GM12878 (cell line): ENCODE measurements at regions of chr19 and their contacts with region 1.

Region 1: GRCh38 chr19:42529248-42529764 is 1.0 kb upstream of the CEACAM1 start:
- DNase-seq: no peak
- ATAC-seq: peak; percentile 94
- H3K4me3 ChIP-seq: peak overlapping the region; percentile 20; the same call in 1 of the 2 replicates
- H3K27ac ChIP-seq: peak overlapping the region; percentile 74
- H3K4me1 ChIP-seq: peaks cover 15% of the 10 kb centered on the region
- H3K27me3 ChIP-seq: no peaks in the 10 kb centered on the region
- CTCF ChIP-seq: peak; percentile 97 to 98 (median 97); a peak in 5 of 6 replicates
- EP300 ChIP-seq: no peak
- POLR2A ChIP-seq: 0 out of 2 replicates have a peak, but pooled peaks have one; percentile 25
- RAD21 ChIP-seq: peak; percentile 98

Region 2: GRCh38 chr19:42433503-42434260 is 95.6 kb before region 1 on chr19:
- CTCF ChIA-PET with region 1: interaction called, 40 read pairs
- POLR2A ChIA-PET with region 1: interaction called, 3 read pairs
- RAD21 ChIA-PET with region 1: interaction called, 23 read pairs
- SMC1A ChIA-PET with region 1: interaction called, 23 read pairs
- in situ Hi-C with region 1: no loop called
- intact Hi-C with region 1: no loop called
- DNase-seq: no peak
- ATAC-seq: peak; percentile 97
- H3K4me3 ChIP-seq: no peak overlapping the region
- H3K27ac ChIP-seq: no peak overlapping the region
- H3K4me1 ChIP-seq: no peaks in the 10 kb centered on the region
- H3K27me3 ChIP-seq: no peaks in the 10 kb centered on the region
- CTCF ChIP-seq: peak; percentile 91 to 95 (median 93)
- EP300 ChIP-seq: no peak
- POLR2A ChIP-seq: no peak
- RAD21 ChIP-seq: peak; percentile 83

Region 3: DNA sequence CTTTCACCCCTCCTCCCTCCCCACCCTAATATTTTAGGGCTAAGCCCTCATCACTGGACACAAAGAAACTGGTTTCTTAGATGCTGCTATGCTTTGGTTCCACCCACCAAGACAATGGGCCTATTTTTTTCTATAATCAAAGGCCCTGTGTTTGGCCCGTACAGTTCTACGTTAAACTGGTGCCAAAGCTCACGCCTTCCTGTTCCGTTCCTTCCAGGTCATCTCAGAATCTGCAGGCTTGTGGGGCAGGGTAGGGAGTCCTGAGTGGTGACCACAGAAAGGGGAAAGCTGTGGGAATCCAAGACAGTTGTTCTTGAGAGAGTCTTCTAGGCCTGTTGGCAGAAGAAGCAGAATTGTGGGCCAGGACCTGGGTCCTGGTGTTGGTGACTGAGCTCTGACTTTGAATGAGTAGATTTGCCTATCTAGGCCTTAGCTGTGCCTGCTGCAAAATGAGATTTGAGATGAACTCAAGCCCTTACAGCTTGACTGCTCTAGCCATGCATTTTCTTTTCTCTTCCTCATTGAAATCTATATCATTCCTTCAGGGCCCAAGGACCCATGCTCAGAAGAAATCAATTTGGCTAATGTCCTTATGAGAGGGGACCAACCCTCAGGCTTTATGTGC is 67.5 kb before region 1 on chr19:
- CTCF ChIA-PET with region 1: interaction called, 116 read pairs
- POLR2A ChIA-PET with region 1: interaction called, 32 read pairs
- RAD21 ChIA-PET with region 1: interaction called, 135 read pairs
- SMC1A ChIA-PET with region 1: interaction called, 127 read pairs
- in situ Hi-C with region 1: no loop called
- intact Hi-C with region 1: loop called (anchors 1 kb)
- DNase-seq: no peak
- ATAC-seq: no peak
- H3K4me3 ChIP-seq: no peak overlapping the region
- H3K27ac ChIP-seq: no peak overlapping the region
- H3K4me1 ChIP-seq: peaks cover 22% of the 10 kb centered on the region
- H3K27me3 ChIP-seq: no peaks in the 10 kb centered on the region
- CTCF ChIP-seq: no peak
- EP300 ChIP-seq: no peak
- POLR2A ChIP-seq: no peak
- RAD21 ChIP-seq: no peak

Region 4: DNA sequence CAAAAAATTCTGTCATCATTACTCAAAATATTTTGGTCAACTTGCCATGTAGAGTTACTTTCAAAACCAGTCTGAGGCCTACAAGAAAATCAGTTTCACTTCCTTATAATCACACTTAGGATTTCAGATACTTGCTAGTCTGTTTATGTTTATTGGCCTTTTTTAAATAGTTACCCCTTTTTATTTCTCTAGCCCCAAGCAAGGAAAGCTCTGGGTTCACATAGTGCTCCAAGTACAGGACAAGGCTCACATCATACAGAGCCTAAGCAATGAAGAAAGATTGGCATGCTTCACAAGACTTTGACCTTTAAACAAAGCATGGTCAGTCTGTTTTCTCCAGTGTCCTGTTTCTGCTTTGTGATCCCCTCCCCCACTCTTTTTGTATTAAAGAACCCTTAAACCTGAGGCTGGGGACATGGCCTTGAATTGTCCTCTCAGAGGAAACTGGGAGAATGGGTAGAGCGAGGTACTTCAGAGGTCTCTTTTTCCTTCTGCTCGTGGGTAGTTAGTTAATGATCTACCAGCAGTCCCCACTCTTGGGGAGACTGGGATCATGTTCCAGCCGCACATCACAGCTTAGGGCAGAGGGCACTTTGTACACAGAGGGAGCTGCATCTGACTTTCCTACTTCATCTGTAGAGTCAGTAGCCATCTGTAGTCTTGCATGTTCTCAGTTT is 31.7 kb before region 1 on chr19:
- CTCF ChIA-PET with region 1: interaction called, 10 read pairs
- POLR2A ChIA-PET with region 1: interaction called, 4 read pairs
- RAD21 ChIA-PET with region 1: interaction called, 6 read pairs
- SMC1A ChIA-PET with region 1: interaction called, 48 read pairs
- in situ Hi-C with region 1: no loop called
- intact Hi-C with region 1: no loop called
- DNase-seq: peak; percentile 60
- ATAC-seq: peak; percentile 86
- H3K4me3 ChIP-seq: peak overlapping the region; percentile 9; the same call in 1 of the 2 replicates
- H3K27ac ChIP-seq: peak overlapping the region; percentile 80
- H3K4me1 ChIP-seq: peaks cover 28% of the 10 kb centered on the region
- H3K27me3 ChIP-seq: no peaks in the 10 kb centered on the region
- CTCF ChIP-seq: no peak
- EP300 ChIP-seq: peak; percentile 66 to 78; a peak in 3 of 4 replicates
- POLR2A ChIP-seq: no peak
- RAD21 ChIP-seq: 0 out of 2 replicates have a peak, but pooled peaks have one; percentile 8

Region 5: GRCh38 chr19:42519108-42519507 is 10.2 kb before region 1 on chr19:
- CTCF ChIA-PET with region 1: interaction called, 51 read pairs
- POLR2A ChIA-PET with region 1: interaction called, 16 read pairs
- RAD21 ChIA-PET with region 1: interaction called, 39 read pairs
- SMC1A ChIA-PET with region 1: interaction called, 53 read pairs
- in situ Hi-C with region 1: no loop called
- intact Hi-C with region 1: no loop called
- DNase-seq: no peak
- ATAC-seq: no peak
- H3K4me3 ChIP-seq: no peak overlapping the region
- H3K27ac ChIP-seq: no peak overlapping the region
- H3K4me1 ChIP-seq: peaks cover 18% of the 10 kb centered on the region
- H3K27me3 ChIP-seq: no peaks in the 10 kb centered on the region
- CTCF ChIP-seq: no peak
- EP300 ChIP-seq: no peak
- POLR2A ChIP-seq: no peak
- RAD21 ChIP-seq: no peak

Region 6: DNA sequence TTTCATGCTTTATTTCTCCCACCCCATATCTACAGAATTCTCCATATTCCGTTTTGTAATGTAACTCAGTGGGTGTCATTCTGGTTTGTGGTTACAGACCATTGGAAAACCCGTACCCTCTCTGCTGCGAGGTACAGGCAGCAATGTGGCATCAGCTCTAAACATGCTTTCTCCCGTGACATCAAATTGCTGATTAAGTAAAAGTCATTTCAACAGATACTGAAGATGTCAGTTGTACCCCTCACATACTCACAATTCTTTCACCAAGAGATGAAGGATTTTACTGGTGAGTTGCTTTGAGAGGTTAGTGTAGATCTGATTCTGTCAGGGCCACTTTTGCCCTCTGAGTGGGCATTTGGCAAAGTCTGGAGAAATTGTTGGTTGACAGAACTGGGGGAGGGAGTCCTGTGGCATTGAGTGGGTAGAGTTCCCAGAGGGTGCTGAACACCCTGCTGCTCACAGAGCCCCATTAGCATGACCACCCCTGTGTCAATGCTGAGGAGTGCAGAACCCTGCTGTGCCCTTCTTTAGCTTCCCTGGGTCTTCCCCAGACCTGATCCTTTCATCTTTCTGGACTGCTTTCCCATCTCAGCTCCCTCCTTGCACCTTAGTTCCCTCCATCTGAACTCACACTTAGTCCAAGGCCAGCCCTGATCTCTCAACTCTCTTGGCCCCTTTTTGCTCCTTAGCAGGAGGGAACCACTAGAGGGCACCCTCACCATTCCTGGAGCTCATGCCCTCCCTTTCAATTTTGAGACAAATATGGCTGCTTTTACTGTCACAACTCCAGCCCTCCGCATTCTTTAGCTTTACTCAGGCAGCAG is 105.3 kb after region 1 on chr19:
- CTCF ChIA-PET with region 1: no interaction called
- POLR2A ChIA-PET with region 1: no interaction called
- RAD21 ChIA-PET with region 1: no interaction called
- SMC1A ChIA-PET with region 1: no interaction called
- in situ Hi-C with region 1: no loop called
- intact Hi-C with region 1: no loop called
- DNase-seq: no peak
- ATAC-seq: peak; percentile 82
- H3K4me3 ChIP-seq: no peak overlapping the region
- H3K27ac ChIP-seq: no peak overlapping the region
- H3K4me1 ChIP-seq: no peaks in the 10 kb centered on the region
- H3K27me3 ChIP-seq: no peaks in the 10 kb centered on the region; a peak in 2 of 4 replicates
- CTCF ChIP-seq: peak; percentile 75 to 82 (median 82)
- EP300 ChIP-seq: no peak
- POLR2A ChIP-seq: no peak
- RAD21 ChIP-seq: peak; percentile 74

Region 7: DNA sequence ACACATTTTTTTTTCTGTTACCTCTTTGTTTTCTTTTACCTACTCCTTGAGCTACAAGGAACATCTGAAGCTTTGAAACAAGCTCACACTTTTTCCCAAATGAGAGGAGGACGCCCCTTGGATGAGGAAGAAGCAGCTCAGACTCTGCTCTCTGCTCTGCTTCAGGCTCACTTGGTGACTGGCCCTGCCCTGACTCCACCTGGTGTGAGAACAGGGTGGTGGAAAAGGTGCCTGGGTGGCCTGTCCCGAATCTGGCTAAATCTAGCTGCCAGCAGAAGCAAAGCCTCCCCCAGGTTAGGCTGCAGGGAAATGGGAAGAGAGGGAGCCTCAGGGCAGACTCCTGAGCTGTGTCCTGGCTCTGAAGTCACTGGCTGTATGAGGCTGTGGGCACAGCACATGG is 133.4 kb after region 1 on chr19:
- CTCF ChIA-PET with region 1: no interaction called
- POLR2A ChIA-PET with region 1: no interaction called
- RAD21 ChIA-PET with region 1: no interaction called
- SMC1A ChIA-PET with region 1: no interaction called
- in situ Hi-C with region 1: no loop called
- intact Hi-C with region 1: no loop called
- DNase-seq: no peak
- ATAC-seq: no peak
- H3K4me3 ChIP-seq: no peak overlapping the region
- H3K27ac ChIP-seq: no peak overlapping the region
- H3K4me1 ChIP-seq: no peaks in the 10 kb centered on the region
- H3K27me3 ChIP-seq: no peaks in the 10 kb centered on the region
- CTCF ChIP-seq: no peak
- EP300 ChIP-seq: no peak
- POLR2A ChIP-seq: no peak
- RAD21 ChIP-seq: no peak